B cell (primary cell): ENCODE measurements at regions of chr1 and their contacts with region 1.

Region 1: DNA sequence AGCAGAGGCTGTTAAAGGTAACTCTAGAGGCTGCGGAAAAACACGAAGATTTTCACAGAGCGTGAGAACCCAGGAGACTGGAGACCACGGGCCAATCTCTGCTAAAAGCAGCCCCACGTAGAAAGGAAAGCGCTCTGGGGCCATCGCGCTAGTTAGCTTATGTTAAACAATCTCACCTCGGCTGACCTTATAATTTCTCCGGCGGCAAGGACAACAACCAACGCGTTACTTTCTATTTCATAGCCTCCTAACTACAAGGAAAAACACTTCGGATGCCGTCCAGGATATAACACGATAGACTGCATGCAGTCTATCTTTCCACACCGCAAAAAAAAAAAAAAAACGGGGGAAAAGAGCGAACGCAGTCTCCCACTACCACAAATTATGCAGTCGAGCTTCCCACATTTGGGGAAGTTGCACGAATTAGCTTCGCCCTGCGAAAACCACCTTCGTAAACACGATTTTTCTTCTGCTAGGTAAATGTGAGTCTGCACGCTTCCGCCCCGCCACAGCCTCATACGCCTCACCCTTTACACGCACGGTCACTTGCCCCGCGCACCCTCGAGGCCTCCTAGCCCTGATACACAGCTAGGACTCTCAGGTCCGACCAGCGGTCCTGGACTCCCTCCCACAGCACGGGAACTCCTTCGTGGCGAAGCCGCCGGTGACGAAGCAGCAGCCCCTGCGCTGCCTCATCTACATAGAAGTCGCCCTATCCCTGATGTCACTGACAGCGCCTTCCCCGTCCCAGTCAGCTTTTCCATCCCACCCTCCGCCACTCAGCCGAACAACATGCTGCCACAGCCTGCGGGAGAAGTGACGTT is 87.8 kb downstream of the PRKAB2 start:
- DNase-seq: peak; percentile 92
- ATAC-seq: peak; percentile 76
- H3K4me3 ChIP-seq: peak overlapping the region; percentile 56 to 79 (median 71)
- H3K4me3 Mint-ChIP-seq: peak overlapping the region; percentile 99
- H3K27ac ChIP-seq: peak overlapping the region; percentile 93 to 96
- H3K27ac Mint-ChIP-seq: peak overlapping the region; percentile 100
- H3K4me1 ChIP-seq: peaks cover 33 to 36% of the 10 kb centered on the region in 2 donors
- H3K4me1 Mint-ChIP-seq: peaks cover 33% of the 10 kb centered on the region
- H3K27me3 ChIP-seq: peaks cover 0 to 29% (median 23%) of the 10 kb centered on the region in 4 experiments
- H3K27me3 Mint-ChIP-seq: peaks cover 51% of the 10 kb centered on the region
- CTCF ChIP-seq: no peak

Region 2: GRCh38 chr1:147046189-147046862 is 38.2 kb before region 1 on chr1:
- CTCF ChIA-PET with region 1: interaction called, 6 read pairs
- POLR2A ChIA-PET with region 1: interaction called, 8 read pairs
- intact Hi-C with region 1: loop called (anchors 5 kb)
- DNase-seq: peak; percentile 49
- ATAC-seq: peak; percentile 61
- H3K4me3 ChIP-seq: peak overlapping the region in 1 of 5 experiments; percentile 15
- H3K4me3 Mint-ChIP-seq: peak overlapping the region; percentile 84
- H3K27ac ChIP-seq: peak overlapping the region; percentile 55 to 70
- H3K27ac Mint-ChIP-seq: peak overlapping the region; percentile 94
- H3K4me1 ChIP-seq: peaks cover 49 to 50% of the 10 kb centered on the region in 2 donors
- H3K4me1 Mint-ChIP-seq: peaks cover 63% of the 10 kb centered on the region
- H3K27me3 ChIP-seq: no peaks in the 10 kb centered on the region
- H3K27me3 Mint-ChIP-seq: no peaks in the 10 kb centered on the region
- CTCF ChIP-seq: no peak

Region 3: DNA sequence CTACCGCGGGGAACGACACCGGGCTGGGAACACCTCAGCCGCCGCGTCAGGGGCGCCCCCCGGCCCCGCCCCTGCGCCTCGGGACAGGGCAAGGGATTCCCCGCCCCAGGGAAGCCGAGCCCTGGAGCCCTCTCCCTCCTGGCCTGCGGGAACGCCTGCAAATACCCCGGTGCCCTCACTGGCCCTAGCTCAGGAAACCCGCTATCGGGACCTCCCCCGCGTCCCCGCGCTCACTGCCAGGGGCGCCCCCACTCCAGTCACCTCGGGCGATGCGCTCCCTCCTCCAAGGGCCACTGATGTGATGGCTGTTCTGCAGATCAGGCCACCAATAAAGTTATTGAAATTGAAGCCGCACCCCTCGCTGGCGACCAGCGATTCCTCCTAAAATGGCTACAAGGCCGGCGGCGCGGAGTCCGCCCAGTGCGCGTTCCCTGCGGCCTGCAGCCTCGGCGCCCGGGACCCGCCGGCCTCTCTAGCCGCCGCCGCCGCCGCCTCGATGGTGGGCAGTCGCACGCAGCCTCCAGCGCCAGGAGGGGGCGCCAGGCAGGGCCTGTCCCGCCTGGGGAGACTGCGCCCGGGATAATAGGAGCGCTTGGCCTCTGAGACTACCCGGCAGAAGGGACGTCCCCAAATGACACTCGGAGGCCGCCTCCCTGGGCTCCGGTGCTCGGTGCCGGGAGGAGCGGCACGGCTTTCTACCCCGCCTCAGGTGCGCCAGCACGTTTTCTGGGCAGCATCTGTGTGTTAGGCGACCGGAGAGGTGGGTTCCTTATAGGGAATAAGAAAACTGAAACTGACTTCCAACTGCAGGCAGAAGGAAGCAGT is 87.9 kb after region 1 on chr1 and contains the start of gene PRKAB2:
- CTCF ChIA-PET with region 1: no interaction called
- POLR2A ChIA-PET with region 1: interaction called, 8 read pairs
- intact Hi-C with region 1: loop called (anchors 1 kb)
- DNase-seq: peak; percentile 97
- ATAC-seq: peak; percentile 88
- H3K4me3 ChIP-seq: peak within 1 kb of the TSS; percentile 86 to 93 (median 92)
- H3K4me3 Mint-ChIP-seq: peak within 1 kb of the TSS; percentile 95
- H3K27ac ChIP-seq: peak within 1 kb of the TSS; percentile 75 to 86
- H3K27ac Mint-ChIP-seq: peak within 1 kb of the TSS; percentile 94
- H3K4me1 ChIP-seq: peaks cover 21 to 22% of the 10 kb centered on the region in 2 donors
- H3K4me1 Mint-ChIP-seq: peaks cover 35% of the 10 kb centered on the region
- H3K27me3 ChIP-seq: no peaks in the 10 kb centered on the region
- H3K27me3 Mint-ChIP-seq: no peaks in the 10 kb centered on the region
- CTCF ChIP-seq: peak; percentile 88
- total RNA-seq, gene PRKAB2: 17.1 and 18.3 TPM in 2 replicates

Region 4: DNA sequence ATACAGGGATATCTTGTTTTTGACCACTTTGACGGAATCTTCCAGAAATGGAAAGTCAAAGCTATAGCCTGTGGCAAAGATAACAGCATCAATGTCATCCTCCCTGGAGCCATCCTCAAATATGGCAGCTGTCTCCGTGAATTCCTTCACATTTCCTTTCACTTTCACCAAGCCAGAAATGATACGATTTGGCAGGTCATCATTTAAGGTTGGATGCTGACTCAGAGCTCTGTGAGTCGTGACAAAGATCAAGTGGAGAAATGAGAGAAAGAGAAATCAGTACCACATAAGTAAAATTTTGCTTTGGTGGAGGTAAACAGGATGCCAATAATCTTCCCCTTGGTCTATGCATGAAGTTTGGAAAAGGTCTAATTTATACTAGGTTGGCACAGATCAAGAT is 116.8 kb after region 1 on chr1:
- CTCF ChIA-PET with region 1: no interaction called
- POLR2A ChIA-PET with region 1: no interaction called
- intact Hi-C with region 1: no loop called
- DNase-seq: no peak
- ATAC-seq: no peak
- H3K4me3 ChIP-seq: no peak overlapping the region
- H3K4me3 Mint-ChIP-seq: no peak overlapping the region
- H3K27ac ChIP-seq: no peak overlapping the region
- H3K27ac Mint-ChIP-seq: no peak overlapping the region
- H3K4me1 ChIP-seq: peaks cover 13 to 22% of the 10 kb centered on the region in 2 donors
- H3K4me1 Mint-ChIP-seq: peaks cover 32% of the 10 kb centered on the region
- H3K27me3 ChIP-seq: no peaks in the 10 kb centered on the region
- H3K27me3 Mint-ChIP-seq: no peaks in the 10 kb centered on the region
- CTCF ChIP-seq: no peak